Colonic mucosa (tissue), 4 donors: ENCODE measurements at regions of chr10 and their contacts with region 1.

Region 1: DNA sequence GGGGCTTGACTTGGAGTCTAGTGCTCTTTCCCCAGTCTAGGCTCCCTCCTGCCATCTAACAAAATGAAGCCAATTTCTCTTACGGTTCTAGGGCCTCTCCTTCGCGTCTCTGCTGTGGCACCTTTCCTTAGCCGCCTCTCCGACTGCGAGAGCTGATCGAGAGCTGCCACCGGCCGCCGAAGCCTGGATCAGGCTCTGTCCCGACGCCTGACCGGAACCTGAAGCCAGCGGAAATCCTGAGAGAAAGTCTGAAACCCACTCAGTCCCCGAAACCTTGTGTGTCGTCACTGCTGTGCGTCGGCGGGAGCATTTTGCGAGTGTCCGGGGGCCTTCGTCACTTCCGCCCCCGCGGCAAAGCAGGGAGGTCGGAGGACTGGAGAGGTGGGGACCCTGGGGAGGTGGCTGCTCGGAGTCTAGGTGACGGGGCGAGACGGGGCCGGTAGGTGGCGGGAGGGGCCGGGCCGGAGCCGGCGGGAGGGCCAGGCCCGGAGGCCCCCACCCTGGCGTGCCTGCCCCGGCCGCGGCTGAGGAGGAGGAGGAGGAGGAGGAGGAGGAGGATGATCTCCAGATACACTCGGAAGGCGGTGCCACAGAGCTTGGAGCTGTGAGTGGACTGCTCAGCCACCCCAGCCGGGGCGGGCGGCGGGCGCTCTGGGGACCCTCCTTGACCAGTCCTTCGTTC is at the starts of genes ECD and FAM149B1:
- DNase-seq: peak; percentile 96
- H3K4me3 ChIP-seq: peak within 1 kb of the TSS; percentile 66
- H3K27ac ChIP-seq: peak within 1 kb of the TSS; percentile 88
- H3K4me1 ChIP-seq: no peaks in the 10 kb centered on the region
- H3K27me3 ChIP-seq: no peaks in the 10 kb centered on the region
- CTCF ChIP-seq: no peak
- total RNA-seq, gene ECD: 17.1 to 18.2 TPM
- total RNA-seq, gene FAM149B1: 14.0 to 16.4 TPM

Region 2: GRCh38 chr10:73096449-73097304 is 71.2 kb before region 1 on chr10 and contains the start of gene P4HA1:
- intact Hi-C with region 1: loop called (anchors 5 kb)
- DNase-seq: peak; percentile 98
- H3K4me3 ChIP-seq: peak within 1 kb of the TSS; percentile 94
- H3K27ac ChIP-seq: peak within 1 kb of the TSS; percentile 99
- H3K4me1 ChIP-seq: no peaks in the 10 kb centered on the region
- H3K27me3 ChIP-seq: no peaks in the 10 kb centered on the region
- CTCF ChIP-seq: peak; percentile 42
- total RNA-seq, gene P4HA1: 31.4 to 85.1 TPM